Caco-2 (cell line): ENCODE measurements at regions of chr19 and their contacts with region 1.

Region 1: GRCh38 chr19:984165-984967 is at the start of gene WDR18:
- DNase-seq: peak; percentile 90 to 92
- H3K4me3 ChIP-seq: peak within 1 kb of the TSS; percentile 60
- H3K4me3 Mint-ChIP-seq: peak within 1 kb of the TSS; percentile 95
- H3K27ac Mint-ChIP-seq: peak within 1 kb of the TSS; percentile 96
- H3K4me1 ChIP-seq: peaks cover 36% of the 10 kb centered on the region
- H3K4me1 Mint-ChIP-seq: peaks cover 8% of the 10 kb centered on the region
- H3K27me3 ChIP-seq: no peaks in the 10 kb centered on the region
- H3K27me3 Mint-ChIP-seq: no peaks in the 10 kb centered on the region
- CTCF ChIP-seq: no peak
- total RNA-seq, gene WDR18: 89.5 and 96.8 TPM in 2 replicates

Region 2: GRCh38 chr19:615619-616018 is 368.7 kb before region 1 on chr19:
- CTCF ChIA-PET with region 1: no interaction called
- POLR2A ChIA-PET with region 1: no interaction called
- intact Hi-C with region 1: no loop called
- DNase-seq: no peak
- H3K4me3 ChIP-seq: no peak overlapping the region
- H3K4me3 Mint-ChIP-seq: no peak overlapping the region
- H3K27ac Mint-ChIP-seq: no peak overlapping the region
- H3K4me1 ChIP-seq: no peaks in the 10 kb centered on the region
- H3K4me1 Mint-ChIP-seq: no peaks in the 10 kb centered on the region
- H3K27me3 ChIP-seq: no peaks in the 10 kb centered on the region
- H3K27me3 Mint-ChIP-seq: no peaks in the 10 kb centered on the region
- CTCF ChIP-seq: no peak

Region 3: GRCh38 chr19:925526-926322 is 58.6 kb before region 1 on chr19 and contains the start of gene ARID3A:
- CTCF ChIA-PET with region 1: interaction called, 16 read pairs
- POLR2A ChIA-PET with region 1: interaction called, 11 read pairs
- intact Hi-C with region 1: loop called (anchors 1 kb)
- DNase-seq: peak; percentile 89 to 91
- H3K4me3 ChIP-seq: peak within 1 kb of the TSS; percentile 98
- H3K4me3 Mint-ChIP-seq: peak within 1 kb of the TSS; percentile 85
- H3K27ac Mint-ChIP-seq: peak within 1 kb of the TSS; percentile 82
- H3K4me1 ChIP-seq: peaks cover 33% of the 10 kb centered on the region
- H3K4me1 Mint-ChIP-seq: no peaks in the 10 kb centered on the region
- H3K27me3 ChIP-seq: no peaks in the 10 kb centered on the region
- H3K27me3 Mint-ChIP-seq: no peaks in the 10 kb centered on the region
- CTCF ChIP-seq: no peak
- total RNA-seq, gene ARID3A: 217 and 239 TPM in 2 replicates

Region 4: DNA sequence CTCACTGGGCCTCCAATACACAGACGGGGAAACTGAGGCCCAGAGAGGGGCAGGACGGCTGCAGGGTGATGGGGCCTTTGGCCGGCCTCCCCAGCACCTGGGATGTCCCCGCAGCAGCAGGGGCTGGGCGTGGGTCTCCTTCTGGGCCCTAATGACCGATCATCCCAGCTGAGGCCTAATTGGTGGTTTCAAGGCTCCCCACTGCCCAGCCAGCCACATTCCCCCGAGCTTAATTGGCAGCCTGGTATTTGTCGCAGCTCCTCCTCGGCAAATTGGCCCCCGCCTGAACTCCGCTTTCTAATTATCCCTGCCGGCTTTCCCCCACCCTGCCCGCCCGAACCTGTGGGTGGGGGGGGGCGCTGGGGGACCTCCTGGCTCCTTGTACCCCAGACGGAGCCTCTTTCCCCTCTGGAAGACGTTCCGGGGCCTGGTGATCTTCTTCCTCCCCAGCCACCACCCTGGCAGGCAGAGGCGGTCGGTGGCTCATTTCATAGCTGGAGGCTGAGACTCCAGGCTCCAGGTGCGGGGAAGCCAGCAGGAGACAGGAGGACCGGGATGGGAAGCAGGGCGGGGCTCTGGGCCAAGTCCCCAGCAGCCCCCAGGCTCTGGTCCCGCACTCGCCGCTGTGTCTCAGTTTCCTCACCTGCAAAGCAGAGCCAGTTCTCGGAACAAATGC is 27.5 kb before region 1 on chr19:
- CTCF ChIA-PET with region 1: interaction called, 5 read pairs
- POLR2A ChIA-PET with region 1: interaction called, 8 read pairs
- intact Hi-C with region 1: loop called (anchors 2 kb)
- DNase-seq: peak; percentile 91 to 94
- H3K4me3 ChIP-seq: 0 out of 2 replicates have a peak overlapping the region, but pooled peaks have one; percentile 8
- H3K4me3 Mint-ChIP-seq: peak overlapping the region; percentile 67
- H3K27ac Mint-ChIP-seq: peak overlapping the region; percentile 96
- H3K4me1 ChIP-seq: peaks cover 88% of the 10 kb centered on the region
- H3K4me1 Mint-ChIP-seq: peaks cover 14% of the 10 kb centered on the region
- H3K27me3 ChIP-seq: no peaks in the 10 kb centered on the region
- H3K27me3 Mint-ChIP-seq: no peaks in the 10 kb centered on the region
- CTCF ChIP-seq: no peak

Region 5: DNA sequence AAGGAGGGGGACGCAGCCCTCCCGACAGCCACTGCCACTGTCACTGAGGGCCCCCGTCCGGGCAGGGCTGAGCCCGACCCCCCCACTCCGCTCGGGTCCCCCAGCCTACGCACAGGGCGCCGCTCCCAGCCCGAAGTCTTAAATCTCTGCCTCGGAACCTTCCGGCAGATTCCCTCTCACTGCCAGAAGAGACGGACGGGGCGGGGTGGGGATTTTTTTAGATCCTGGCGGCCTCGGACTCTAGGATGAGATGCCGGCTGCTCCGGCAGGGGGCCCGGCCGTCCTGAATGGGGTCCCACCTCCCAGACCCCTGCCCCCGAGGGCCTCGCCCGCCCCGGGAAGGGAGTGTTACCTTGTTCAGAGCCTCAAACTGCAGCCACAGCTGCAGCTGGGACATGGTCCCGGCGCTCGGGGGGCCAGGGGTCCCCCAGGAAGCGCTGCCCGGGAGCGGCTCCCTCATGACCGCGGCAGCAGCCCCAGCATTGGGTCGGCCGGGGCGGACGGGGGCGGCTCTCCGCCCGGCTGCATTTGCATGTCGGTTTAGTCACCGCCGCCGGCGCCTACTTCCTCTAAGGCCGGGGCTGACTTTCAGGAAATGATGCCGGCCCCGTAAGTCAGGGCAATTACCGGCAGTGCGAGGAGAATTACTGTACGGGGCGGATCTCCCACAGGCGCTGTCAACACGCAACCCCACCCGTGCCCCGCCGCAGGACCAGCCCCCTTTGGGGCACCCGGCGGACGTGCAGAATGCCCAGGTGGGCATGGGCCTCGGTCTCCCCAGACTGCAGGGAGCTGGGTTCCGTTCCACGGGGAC is 147.6 kb after region 1 on chr19:
- CTCF ChIA-PET with region 1: no interaction called
- POLR2A ChIA-PET with region 1: no interaction called
- intact Hi-C with region 1: no loop called
- DNase-seq: peak in 1 of 2 experiments; percentile 45
- H3K4me3 ChIP-seq: peak overlapping the region; percentile 34
- H3K4me3 Mint-ChIP-seq: peak overlapping the region; percentile 75
- H3K27ac Mint-ChIP-seq: no peak overlapping the region
- H3K4me1 ChIP-seq: peaks cover 6% of the 10 kb centered on the region; the same call in 1 of the 2 replicates
- H3K4me1 Mint-ChIP-seq: no peaks in the 10 kb centered on the region
- H3K27me3 ChIP-seq: no peaks in the 10 kb centered on the region
- H3K27me3 Mint-ChIP-seq: no peaks in the 10 kb centered on the region
- CTCF ChIP-seq: no peak